Activated CD4-positive, alpha-beta T cell treated with anti-CD3 and anti-CD28 coated beads, Interleukin-2, amount 10 ng/mL, durations not matched to agents 7 days and 5 days (primary cell): ENCODE measurements at regions of chr10 and their contacts with region 1.

Region 1: GRCh38 chr10:63703113-63703670 is 182.0 kb downstream of the REEP3 start:
- DNase-seq: no peak
- H3K4me3 Mint-ChIP-seq: no peak overlapping the region
- H3K27ac Mint-ChIP-seq: no peak overlapping the region
- H3K4me1 Mint-ChIP-seq: peaks cover 13% of the 10 kb centered on the region
- H3K27me3 Mint-ChIP-seq: no peaks in the 10 kb centered on the region

Region 2: GRCh38 chr10:63720072-63720537 is 16.9 kb after region 1 on chr10:
- CTCF ChIA-PET with region 1: interaction called, 12 read pairs
- POLR2A ChIA-PET with region 1: no interaction called
- DNase-seq: peak; percentile 58
- H3K4me3 Mint-ChIP-seq: no peak overlapping the region
- H3K27ac Mint-ChIP-seq: no peak overlapping the region
- H3K4me1 Mint-ChIP-seq: peaks cover 25% of the 10 kb centered on the region
- H3K27me3 Mint-ChIP-seq: peaks cover 6% of the 10 kb centered on the region